ENCODE measurements at regions of chr18 and their contacts with region 1.

Region 1: GRCh38 chr18:72544092-72544886 is at the start of gene CBLN2:
- DNase-seq: peak; percentile 26 to 90 (median 74)
- H3K4me3 ChIP-seq: peak within 1 kb of the TSS; percentile 18 to 77 (median 60)
- H3K27ac ChIP-seq: peak within 1 kb of the TSS in 42 of 59 donors; percentile 2 to 74 (median 52)
- H3K27me3 ChIP-seq: peaks cover 0 to 27% (median 7%) of the 10 kb centered on the region in 45 donors
- CTCF ChIP-seq: peak in 55 of 56 donors; percentile 63 to 90 (median 81)
- total RNA-seq, gene CBLN2: 30.3 to 196 (median 107) TPM

Region 2: GRCh38 chr18:70781860-70782453 is 1762.3 kb before region 1 on chr18:
- intact Hi-C with region 1: loop called in 1 of 2 experiments (anchors 5 kb)
- DNase-seq: peak in 6 of 10 donors; percentile 12 to 69 (median 51)
- H3K4me3 ChIP-seq: peak overlapping the region in 1 of 59 donors; percentile 24
- H3K27ac ChIP-seq: no peak overlapping the region
- H3K27me3 ChIP-seq: no peaks in the 10 kb centered on the region
- CTCF ChIP-seq: peak in 55 of 56 donors; percentile 37 to 84 (median 67)

Region 3: GRCh38 chr18:70920840-70921374 is 1623.4 kb before region 1 on chr18:
- intact Hi-C with region 1: loop called in 1 of 2 experiments (anchors 10 kb)
- DNase-seq: no peak
- H3K4me3 ChIP-seq: no peak overlapping the region
- H3K27ac ChIP-seq: no peak overlapping the region
- H3K27me3 ChIP-seq: no peaks in the 10 kb centered on the region
- CTCF ChIP-seq: no peak

Region 4: DNA sequence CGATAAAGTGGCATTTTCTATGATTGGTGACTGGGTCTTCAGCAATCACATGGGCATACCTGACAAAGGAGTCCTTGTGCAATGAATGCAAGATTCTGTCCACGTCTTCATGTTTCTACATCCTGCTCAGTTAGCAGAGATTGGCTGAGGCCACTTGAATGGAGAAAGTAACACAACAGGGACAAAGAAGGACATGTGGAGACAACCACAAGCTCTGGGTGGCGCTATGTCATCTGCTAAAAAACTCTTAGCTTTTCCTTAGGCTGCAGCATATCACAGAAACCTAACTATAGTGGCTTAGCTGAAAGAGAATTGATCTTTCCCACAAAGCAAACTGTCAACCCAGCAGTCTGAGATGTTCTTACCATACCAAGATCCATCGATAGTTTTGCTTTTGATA is 1145.8 kb before region 1 on chr18:
- intact Hi-C with region 1: loop called in 1 of 2 experiments (anchors 10 kb)
- DNase-seq: peak in 7 of 10 donors; percentile 33 to 70 (median 48)
- H3K4me3 ChIP-seq: no peak overlapping the region
- H3K27ac ChIP-seq: no peak overlapping the region
- H3K27me3 ChIP-seq: no peaks in the 10 kb centered on the region
- CTCF ChIP-seq: peak in 53 of 56 donors; percentile 35 to 80 (median 57)

Region 5: DNA sequence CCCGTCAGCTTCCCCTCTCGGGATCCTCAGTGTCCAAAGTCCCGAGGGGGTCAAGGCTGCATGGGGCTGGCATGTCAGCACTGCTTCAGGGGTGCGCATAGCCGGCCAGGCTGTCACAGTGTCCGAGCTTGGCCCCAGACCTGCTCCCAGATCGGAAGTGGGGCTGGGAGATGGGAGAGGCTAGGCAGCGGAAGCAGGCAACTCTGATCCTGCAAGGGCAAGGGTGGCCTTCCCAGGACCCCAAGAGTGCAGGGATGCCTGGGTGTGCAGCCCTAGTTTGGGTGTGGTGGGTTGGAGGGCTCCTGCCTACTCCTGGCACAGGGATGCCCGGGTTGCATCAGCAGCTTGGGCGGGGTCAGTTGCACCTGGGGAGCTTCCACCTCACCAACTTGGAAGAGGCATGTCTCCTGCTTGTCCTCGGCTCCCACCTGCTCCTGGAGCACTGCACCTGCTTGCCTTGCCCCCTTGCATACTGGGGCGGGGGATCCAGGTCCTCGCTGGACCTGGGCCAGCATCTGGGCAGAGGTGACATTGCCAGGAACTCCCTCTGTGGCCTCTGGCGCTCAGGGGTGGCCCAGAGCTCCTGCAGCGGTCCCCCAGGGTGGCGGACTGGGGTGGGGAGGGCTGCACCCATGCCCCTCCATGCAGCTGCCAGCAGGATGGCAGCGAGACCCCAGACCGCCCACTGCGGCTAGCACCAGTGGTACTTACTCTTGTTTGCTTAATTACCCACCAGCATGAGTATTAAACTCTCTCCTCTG is 41.4 kb before region 1 on chr18:
- intact Hi-C with region 1: no loop called
- DNase-seq: no peak
- H3K4me3 ChIP-seq: no peak overlapping the region
- H3K27ac ChIP-seq: no peak overlapping the region
- H3K27me3 ChIP-seq: no peaks in the 10 kb centered on the region
- CTCF ChIP-seq: no peak

Region 6: GRCh38 chr18:72634500-72634899 is 90.2 kb after region 1 on chr18:
- intact Hi-C with region 1: loop called in 1 of 2 experiments (anchors 5 kb)
- DNase-seq: no peak
- H3K4me3 ChIP-seq: peak overlapping the region in 22 of 59 donors; percentile 5 to 63 (median 26)
- H3K27ac ChIP-seq: no peak overlapping the region
- H3K27me3 ChIP-seq: no peaks in the 10 kb centered on the region
- CTCF ChIP-seq: peak in 6 of 56 donors; percentile 9 to 19 (median 13)

Measured in dorsolateral prefrontal cortex (tissue), 120 donors.